Naive thymus-derived CD4-positive, alpha-beta T cell (primary cell): ENCODE measurements at regions of chr20 and their contacts with region 1.

Region 1: GRCh38 chr20:43590392-43591323 is at the start of gene IFT52:
- DNase-seq: peak; percentile 76 to 89 (median 87)
- ATAC-seq: peak; percentile 98
- H3K4me3 ChIP-seq: peak within 1 kb of the TSS; percentile 90
- H3K4me3 Mint-ChIP-seq: peak within 1 kb of the TSS; percentile 90 to 97 (median 94)
- H3K27ac ChIP-seq: peak within 1 kb of the TSS; percentile 88
- H3K27ac Mint-ChIP-seq: peak within 1 kb of the TSS; percentile 91 to 98 (median 97)
- H3K4me1 ChIP-seq: peaks cover 5 to 10% of the 10 kb centered on the region in 2 donors
- H3K4me1 Mint-ChIP-seq: peaks cover 17 to 21% (median 21%) of the 10 kb centered on the region in 7 donors
- H3K27me3 ChIP-seq: no peaks in the 10 kb centered on the region
- H3K27me3 Mint-ChIP-seq: peaks cover 0 to 5% (median 0%) of the 10 kb centered on the region in 5 donors
- total RNA-seq, gene IFT52: 14.8 to 19.7 (median 16.9) TPM

Region 2: DNA sequence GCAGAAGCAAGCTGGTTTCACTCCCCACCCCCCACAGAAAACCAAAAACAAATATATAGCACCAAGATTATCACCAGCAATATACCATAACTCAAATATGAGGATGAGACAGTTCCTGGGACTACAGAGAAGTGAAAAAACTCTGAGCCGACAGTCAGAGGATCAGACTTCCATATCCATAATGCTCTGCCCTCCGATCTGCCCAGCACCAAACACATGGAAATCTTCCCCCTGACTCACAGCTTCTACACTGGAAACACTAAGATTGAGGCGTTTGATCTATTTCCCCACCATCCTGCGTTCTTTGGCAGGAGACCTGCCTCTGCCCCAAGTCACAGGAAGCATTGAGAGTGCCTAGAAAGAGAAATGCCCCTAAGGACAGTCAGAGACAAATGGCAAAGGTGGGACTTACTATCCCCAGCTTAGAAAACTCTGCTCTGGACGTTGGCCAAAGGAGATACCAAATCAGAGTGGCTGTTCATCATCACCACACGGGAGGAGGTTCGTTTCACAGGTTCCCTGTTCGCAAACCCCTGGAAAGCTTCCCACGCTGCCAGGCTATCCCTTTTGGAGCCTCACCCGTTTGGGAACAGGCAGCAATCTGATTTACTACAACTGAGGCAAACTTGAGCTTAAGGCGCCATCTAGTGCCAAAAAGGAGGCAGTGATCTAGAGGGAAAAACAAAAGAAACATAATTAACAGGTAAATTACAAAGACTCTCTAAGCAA is 181.6 kb before region 1 on chr20:
- CTCF ChIA-PET with region 1: no interaction called
- POLR2A ChIA-PET with region 1: no interaction called
- intact Hi-C with region 1: no loop called
- DNase-seq: no peak
- ATAC-seq: no peak
- H3K4me3 ChIP-seq: no peak overlapping the region
- H3K4me3 Mint-ChIP-seq: no peak overlapping the region
- H3K27ac ChIP-seq: no peak overlapping the region
- H3K27ac Mint-ChIP-seq: no peak overlapping the region
- H3K4me1 ChIP-seq: no peaks in the 10 kb centered on the region
- H3K4me1 Mint-ChIP-seq: no peaks in the 10 kb centered on the region
- H3K27me3 ChIP-seq: peaks cover 0 to 8% of the 10 kb centered on the region in 2 donors
- H3K27me3 Mint-ChIP-seq: peaks cover 18 to 77% (median 70%) of the 10 kb centered on the region in 5 donors

Region 3: GRCh38 chr20:43448748-43449535 is 141.7 kb before region 1 on chr20:
- CTCF ChIA-PET with region 1: no interaction called
- POLR2A ChIA-PET with region 1: no interaction called
- intact Hi-C with region 1: loop called in 1 of 2 experiments (anchors 2 kb)
- DNase-seq: peak in 6 of 9 donors; percentile 28 to 47 (median 38)
- ATAC-seq: peak; percentile 70
- H3K4me3 ChIP-seq: no peak overlapping the region
- H3K4me3 Mint-ChIP-seq: peak overlapping the region in 1 of 10 donors; percentile 21
- H3K27ac ChIP-seq: no peak overlapping the region
- H3K27ac Mint-ChIP-seq: no peak overlapping the region
- H3K4me1 ChIP-seq: no peaks in the 10 kb centered on the region
- H3K4me1 Mint-ChIP-seq: peaks cover 0 to 8% (median 4%) of the 10 kb centered on the region in 7 donors
- H3K27me3 ChIP-seq: no peaks in the 10 kb centered on the region
- H3K27me3 Mint-ChIP-seq: peaks cover 8 to 35% (median 22%) of the 10 kb centered on the region in 5 donors

Region 4: DNA sequence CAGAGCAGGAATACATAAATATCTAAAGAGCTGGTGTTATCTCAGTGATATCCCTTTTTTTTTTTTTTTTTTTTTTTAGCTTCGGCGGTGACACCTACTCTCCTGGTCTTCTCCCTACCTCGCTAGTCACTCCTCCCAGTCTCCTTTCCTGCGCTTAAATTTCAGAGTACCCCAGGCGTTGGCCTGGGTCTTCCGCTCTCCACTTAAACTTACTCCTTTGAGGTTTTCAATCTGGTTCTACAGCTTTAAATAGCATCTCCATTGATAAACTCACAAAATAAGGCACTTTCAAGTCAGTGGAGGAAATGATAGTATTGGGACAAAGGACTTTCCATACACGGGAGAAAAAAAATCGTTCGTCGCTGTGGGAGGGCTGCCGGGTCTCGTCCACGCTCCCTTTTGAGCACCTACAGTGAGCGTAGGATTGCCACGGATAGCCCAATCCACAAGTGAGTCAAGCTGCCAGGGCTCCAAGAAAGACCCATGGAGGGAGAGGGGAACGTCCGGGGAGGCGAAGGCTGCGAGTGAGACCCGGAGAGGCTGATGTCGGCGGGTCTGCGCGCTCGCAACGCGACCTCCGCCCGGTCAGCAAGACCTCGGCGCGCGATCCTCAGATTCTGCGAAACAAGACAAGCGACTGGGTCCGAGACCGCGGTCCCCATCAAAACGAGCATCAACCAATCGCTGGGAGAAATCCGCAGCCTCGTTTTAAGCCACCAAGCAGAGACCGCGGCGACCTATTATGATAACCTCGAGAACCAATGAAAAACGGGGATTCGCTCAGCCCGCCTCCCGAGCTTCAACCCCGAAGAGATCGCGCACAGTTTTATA is 133.6 kb before region 1 on chr20:
- CTCF ChIA-PET with region 1: no interaction called
- POLR2A ChIA-PET with region 1: interaction called, 9 read pairs
- intact Hi-C with region 1: loop called (anchors 1 kb)
- DNase-seq: peak in 7 of 9 donors; percentile 73 to 92 (median 91)
- ATAC-seq: peak; percentile 82
- H3K4me3 ChIP-seq: peak overlapping the region; percentile 86
- H3K4me3 Mint-ChIP-seq: peak overlapping the region; percentile 79 to 100 (median 94)
- H3K27ac ChIP-seq: peak overlapping the region; percentile 100
- H3K27ac Mint-ChIP-seq: peak overlapping the region; percentile 96 to 100 (median 99)
- H3K4me1 ChIP-seq: peaks cover 10 to 29% of the 10 kb centered on the region in 2 donors
- H3K4me1 Mint-ChIP-seq: peaks cover 24 to 42% (median 35%) of the 10 kb centered on the region in 7 donors
- H3K27me3 ChIP-seq: no peaks in the 10 kb centered on the region
- H3K27me3 Mint-ChIP-seq: peaks cover 0 to 14% (median 4%) of the 10 kb centered on the region in 5 donors

Region 5: GRCh38 chr20:43514062-43514999 is 76.3 kb before region 1 on chr20:
- CTCF ChIA-PET with region 1: no interaction called
- POLR2A ChIA-PET with region 1: interaction called, 3 read pairs
- intact Hi-C with region 1: loop called (anchors 1 kb)
- DNase-seq: peak; percentile 74 to 94 (median 90)
- ATAC-seq: peak; percentile 96
- H3K4me3 ChIP-seq: peak overlapping the region; percentile 70
- H3K4me3 Mint-ChIP-seq: peak overlapping the region; percentile 89 to 100 (median 94)
- H3K27ac ChIP-seq: peak overlapping the region; percentile 58
- H3K27ac Mint-ChIP-seq: peak overlapping the region; percentile 86 to 94 (median 90)
- H3K4me1 ChIP-seq: peaks cover 7 to 21% of the 10 kb centered on the region in 2 donors
- H3K4me1 Mint-ChIP-seq: peaks cover 3 to 28% (median 21%) of the 10 kb centered on the region in 7 donors
- H3K27me3 ChIP-seq: no peaks in the 10 kb centered on the region
- H3K27me3 Mint-ChIP-seq: peaks cover 2 to 10% (median 3%) of the 10 kb centered on the region in 5 donors

Region 6: DNA sequence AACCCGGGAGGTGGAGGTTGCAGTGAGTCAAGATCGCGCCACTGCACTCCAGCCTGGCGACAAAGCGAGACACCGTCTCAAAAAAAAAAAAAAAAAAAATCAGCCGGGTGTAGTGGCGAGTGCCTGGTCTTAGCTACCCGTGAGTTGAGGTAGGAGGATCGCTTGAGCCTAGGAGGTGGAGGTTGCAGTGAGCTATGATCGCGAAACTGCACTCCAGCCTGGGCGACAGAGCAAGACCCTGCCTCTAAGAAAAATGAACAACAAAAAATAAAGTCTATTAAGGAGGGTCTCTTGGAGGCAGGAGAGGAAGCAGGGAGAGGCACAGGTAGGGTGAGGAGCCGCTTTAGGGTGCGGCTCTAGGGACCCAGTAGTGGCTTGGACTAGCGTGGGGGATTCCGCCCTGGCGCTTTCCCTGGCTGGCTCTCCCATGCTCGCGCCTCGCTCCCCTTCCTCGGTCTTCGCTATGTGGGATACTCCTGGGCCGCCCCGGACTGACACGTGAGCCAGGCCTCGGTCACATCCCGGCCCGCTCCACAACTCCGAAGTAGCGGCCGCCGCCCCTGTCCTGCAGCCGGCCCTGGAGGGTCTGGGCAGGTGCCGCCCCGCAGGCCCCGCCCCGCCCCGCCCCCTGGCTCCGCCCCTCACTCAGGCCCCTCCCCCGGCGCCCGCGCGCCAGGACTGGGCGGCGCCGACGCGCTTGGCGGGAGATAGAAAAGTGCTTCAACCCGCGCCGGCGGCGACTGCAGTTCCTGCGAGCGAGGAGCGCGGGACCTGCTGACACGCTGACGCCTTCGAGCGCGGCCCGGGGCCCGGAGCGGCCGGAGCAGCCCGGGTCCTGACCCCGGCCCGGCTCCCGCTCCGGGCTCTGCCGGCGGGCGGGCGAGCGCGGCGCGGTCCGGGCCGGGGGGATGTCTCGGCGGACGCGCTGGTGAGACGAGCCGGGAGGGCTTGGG is 76.0 kb after region 1 on chr20 and contains the start of gene MYBL2:
- CTCF ChIA-PET with region 1: no interaction called
- POLR2A ChIA-PET with region 1: interaction called, 3 read pairs
- intact Hi-C with region 1: loop called (anchors 1 kb)
- DNase-seq: peak; percentile 53 to 83 (median 66)
- ATAC-seq: peak; percentile 98
- H3K4me3 ChIP-seq: peak within 1 kb of the TSS; percentile 64
- H3K4me3 Mint-ChIP-seq: peak within 1 kb of the TSS; percentile 68 to 83 (median 71)
- H3K27ac ChIP-seq: peak within 1 kb of the TSS; percentile 35
- H3K27ac Mint-ChIP-seq: peak within 1 kb of the TSS in 2 of 9 donors; percentile 49 to 86
- H3K4me1 ChIP-seq: peaks cover 3 to 8% of the 10 kb centered on the region in 2 donors
- H3K4me1 Mint-ChIP-seq: peaks cover 0 to 29% (median 4%) of the 10 kb centered on the region in 7 donors
- H3K27me3 ChIP-seq: peaks cover 0 to 3% of the 10 kb centered on the region in 2 donors
- H3K27me3 Mint-ChIP-seq: peaks cover 12 to 26% (median 15%) of the 10 kb centered on the region in 5 donors
- total RNA-seq, gene MYBL2: 0.58 to 69.7 (median 2.7) TPM in 3 of 5 experiments, not detected in the others

Region 7: GRCh38 chr20:43721429-43722152 is 130.9 kb after region 1 on chr20:
- CTCF ChIA-PET with region 1: no interaction called
- POLR2A ChIA-PET with region 1: interaction called, 3 read pairs
- intact Hi-C with region 1: loop called in 1 of 2 experiments (anchors 2 kb)
- DNase-seq: no peak
- ATAC-seq: no peak
- H3K4me3 ChIP-seq: peak overlapping the region; percentile 62
- H3K4me3 Mint-ChIP-seq: peak overlapping the region; percentile 62 to 92 (median 79)
- H3K27ac ChIP-seq: peak overlapping the region; percentile 75
- H3K27ac Mint-ChIP-seq: peak overlapping the region; percentile 65 to 95 (median 88)
- H3K4me1 ChIP-seq: peaks cover 0 to 53% of the 10 kb centered on the region in 2 donors
- H3K4me1 Mint-ChIP-seq: peaks cover 13 to 95% (median 70%) of the 10 kb centered on the region in 7 donors
- H3K27me3 ChIP-seq: no peaks in the 10 kb centered on the region
- H3K27me3 Mint-ChIP-seq: no peaks in the 10 kb centered on the region

Region 8: DNA sequence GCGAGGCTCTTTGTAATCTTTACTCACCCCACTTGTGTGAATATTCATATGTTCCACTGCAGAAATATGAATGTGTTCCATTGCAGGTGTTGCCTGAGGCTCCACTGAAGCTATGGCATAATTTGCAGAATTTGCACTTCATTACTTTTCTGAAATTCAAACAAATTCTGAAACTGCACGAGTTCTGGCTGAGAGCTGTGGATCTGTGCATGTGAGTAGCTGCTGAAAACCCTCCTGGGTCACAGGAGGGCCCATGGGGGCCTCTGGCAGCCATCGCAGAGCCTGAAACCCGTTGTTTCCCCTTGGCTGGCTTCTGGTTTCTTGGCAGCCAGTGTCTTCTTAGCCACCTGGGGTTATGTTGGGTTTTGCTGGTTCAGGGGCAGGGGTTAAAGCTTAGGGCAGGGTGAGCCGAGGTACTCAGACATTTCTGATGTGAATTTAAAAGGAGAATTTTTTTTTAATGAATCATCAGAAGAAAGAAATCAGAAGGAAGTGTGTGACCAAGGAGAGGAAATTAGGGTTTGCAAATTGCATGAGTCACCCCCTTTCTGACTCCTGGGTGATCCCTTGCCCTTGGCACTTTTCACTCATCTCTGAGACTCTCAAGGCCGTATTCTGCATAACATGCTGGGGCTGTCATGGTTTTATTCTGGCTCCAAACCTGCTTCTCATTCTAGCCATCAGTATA is 364.5 kb after region 1 on chr20:
- CTCF ChIA-PET with region 1: no interaction called
- POLR2A ChIA-PET with region 1: no interaction called
- intact Hi-C with region 1: loop called in 1 of 2 experiments (anchors 10 kb)
- DNase-seq: peak in 3 of 9 donors; percentile 13 to 49 (median 13)
- ATAC-seq: peak; percentile 72
- H3K4me3 ChIP-seq: no peak overlapping the region
- H3K4me3 Mint-ChIP-seq: peak overlapping the region in 7 of 10 donors; percentile 8 to 65 (median 22)
- H3K27ac ChIP-seq: no peak overlapping the region
- H3K27ac Mint-ChIP-seq: peak overlapping the region in 2 of 9 donors; percentile 28 to 58
- H3K4me1 ChIP-seq: peaks cover 72 to 76% of the 10 kb centered on the region in 2 donors
- H3K4me1 Mint-ChIP-seq: peaks cover 72 to 96% (median 85%) of the 10 kb centered on the region in 7 donors
- H3K27me3 ChIP-seq: peaks cover 0 to 5% of the 10 kb centered on the region in 2 donors
- H3K27me3 Mint-ChIP-seq: peaks cover 0 to 45% (median 0%) of the 10 kb centered on the region in 5 donors